ENCODE measurements at regions of chr17 and their contacts with region 1.

Region 1: DNA sequence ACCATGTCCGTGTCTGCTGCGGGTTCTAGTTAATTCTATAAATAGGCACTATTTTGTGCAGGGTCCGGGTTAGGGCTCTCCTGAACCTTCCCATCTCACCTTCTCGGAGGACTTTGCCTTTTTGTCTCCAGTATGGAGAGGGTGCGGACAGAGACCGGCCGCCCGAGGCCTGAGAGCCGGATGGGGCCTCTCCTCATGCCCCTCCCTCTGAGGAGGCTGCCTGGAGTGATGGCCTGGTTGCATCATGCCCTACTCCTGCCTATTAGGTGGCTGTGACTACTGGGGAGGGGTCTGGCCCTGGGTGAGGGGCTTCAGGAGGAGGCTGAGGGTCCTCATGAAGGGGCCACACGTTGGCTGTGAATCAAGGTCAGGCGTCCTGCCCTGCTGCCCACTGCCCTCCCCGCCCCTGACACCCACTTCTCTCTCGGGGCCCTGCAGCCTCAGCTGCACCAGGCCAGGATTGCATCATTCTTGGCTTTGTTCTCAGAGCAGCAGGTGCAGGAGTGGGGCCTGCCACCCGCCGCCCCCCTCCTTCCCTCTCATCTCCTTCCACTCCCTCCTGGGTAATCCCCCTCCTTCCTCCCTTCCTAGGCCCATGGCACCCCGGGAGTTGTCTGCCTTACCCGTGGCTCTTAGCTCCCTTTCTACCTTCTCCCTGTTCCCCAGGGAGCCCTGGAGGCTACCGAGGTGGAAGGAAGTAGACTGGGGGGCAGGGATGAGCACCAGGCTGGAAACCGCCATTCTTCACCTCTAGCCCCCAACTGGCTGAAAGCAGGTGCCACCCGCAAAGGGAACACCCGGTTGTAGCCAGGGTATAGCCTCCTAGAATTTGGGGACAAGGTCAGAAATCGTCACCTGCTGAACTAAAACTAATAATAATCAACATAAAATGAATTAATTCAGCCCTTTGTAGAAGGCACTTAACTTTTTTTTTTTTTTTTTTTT is 12.7 kb upstream of the ARHGAP23 start:
- DNase-seq: peak; percentile 69
- ATAC-seq: peak; percentile 43
- H3K4me3 Mint-ChIP-seq: peak overlapping the region; percentile 61
- H3K27ac Mint-ChIP-seq: peak overlapping the region; percentile 91
- H3K4me1 Mint-ChIP-seq: peaks cover 59% of the 10 kb centered on the region
- H3K27me3 Mint-ChIP-seq: peaks cover 29% of the 10 kb centered on the region
- CTCF ChIP-seq: no peak

Region 2: DNA sequence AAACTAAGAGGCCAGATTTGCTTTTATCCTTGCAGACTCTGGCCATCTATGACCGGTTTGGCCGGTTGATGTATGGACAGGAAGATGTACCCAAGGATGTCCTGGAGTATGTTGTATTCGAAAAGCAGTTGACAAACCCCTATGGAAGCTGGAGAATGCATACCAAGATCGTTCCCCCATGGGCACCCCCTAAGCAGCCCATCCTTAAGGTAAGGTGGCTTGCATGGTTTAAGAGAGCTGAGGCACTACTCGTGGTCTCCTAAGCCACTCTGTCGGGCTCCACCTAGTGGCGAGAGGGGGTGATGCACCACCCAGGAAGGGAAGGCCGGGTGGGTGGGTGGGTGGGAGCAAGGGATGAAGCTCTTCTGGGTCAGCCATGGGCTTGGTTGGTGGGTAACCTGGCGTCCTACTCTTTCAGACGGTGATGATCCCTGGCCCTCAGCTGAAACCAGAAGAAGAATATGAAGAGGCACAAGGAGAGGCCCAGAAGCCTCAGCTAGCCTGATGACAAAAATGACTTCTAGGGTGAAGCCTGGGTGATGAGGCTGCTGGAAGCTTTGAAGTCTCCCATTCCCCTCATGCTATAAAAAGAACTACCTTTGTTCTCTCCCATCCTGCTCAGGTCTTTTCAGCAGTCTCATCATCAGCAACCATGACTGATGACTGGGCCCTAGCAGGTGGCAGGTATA is 93.3 kb before region 1 on chr17:
- CTCF ChIA-PET with region 1: interaction called, 43 read pairs
- POLR2A ChIA-PET with region 1: interaction called, 6 read pairs
- DNase-seq: peak; percentile 83
- ATAC-seq: peak; percentile 78
- H3K4me3 Mint-ChIP-seq: no peak overlapping the region
- H3K27ac Mint-ChIP-seq: no peak overlapping the region; the same call in 1 of the 2 replicates
- H3K4me1 Mint-ChIP-seq: peaks cover 22% of the 10 kb centered on the region
- H3K27me3 Mint-ChIP-seq: no peaks in the 10 kb centered on the region
- CTCF ChIP-seq: peak; percentile 90

Region 3: GRCh38 chr17:38358586-38359513 is 56.7 kb before region 1 on chr17:
- CTCF ChIA-PET with region 1: interaction called, 51 read pairs
- POLR2A ChIA-PET with region 1: interaction called, 3 read pairs
- DNase-seq: no peak
- ATAC-seq: no peak
- H3K4me3 Mint-ChIP-seq: no peak overlapping the region
- H3K27ac Mint-ChIP-seq: peak overlapping the region; percentile 46; the same call in 1 of the 2 replicates
- H3K4me1 Mint-ChIP-seq: peaks cover 61% of the 10 kb centered on the region
- H3K27me3 Mint-ChIP-seq: no peaks in the 10 kb centered on the region
- CTCF ChIP-seq: no peak

Region 4: DNA sequence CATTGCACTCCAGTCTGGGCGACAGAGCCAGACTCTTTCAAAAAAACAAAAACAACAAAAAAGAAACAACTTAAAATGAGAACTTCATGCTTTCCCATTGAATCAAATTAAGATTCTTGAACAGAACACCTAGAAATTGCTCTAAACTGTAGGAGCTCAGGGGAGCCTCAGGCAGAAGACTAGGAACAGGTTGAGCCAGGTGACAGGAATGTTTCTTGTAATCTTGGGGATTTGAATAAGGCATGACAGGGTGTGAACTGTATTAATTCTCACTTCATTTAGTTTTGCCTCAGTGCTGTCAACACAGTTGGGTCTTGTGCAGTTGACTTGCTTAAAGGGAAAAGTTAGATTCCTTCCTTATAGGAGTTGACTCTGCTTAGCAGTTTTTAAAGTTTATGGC is 36.1 kb before region 1 on chr17:
- CTCF ChIA-PET with region 1: interaction called, 17 read pairs
- POLR2A ChIA-PET with region 1: no interaction called
- DNase-seq: no peak
- ATAC-seq: no peak
- H3K4me3 Mint-ChIP-seq: no peak overlapping the region
- H3K27ac Mint-ChIP-seq: no peak overlapping the region
- H3K4me1 Mint-ChIP-seq: no peaks in the 10 kb centered on the region
- H3K27me3 Mint-ChIP-seq: no peaks in the 10 kb centered on the region
- CTCF ChIP-seq: no peak

Region 5: DNA sequence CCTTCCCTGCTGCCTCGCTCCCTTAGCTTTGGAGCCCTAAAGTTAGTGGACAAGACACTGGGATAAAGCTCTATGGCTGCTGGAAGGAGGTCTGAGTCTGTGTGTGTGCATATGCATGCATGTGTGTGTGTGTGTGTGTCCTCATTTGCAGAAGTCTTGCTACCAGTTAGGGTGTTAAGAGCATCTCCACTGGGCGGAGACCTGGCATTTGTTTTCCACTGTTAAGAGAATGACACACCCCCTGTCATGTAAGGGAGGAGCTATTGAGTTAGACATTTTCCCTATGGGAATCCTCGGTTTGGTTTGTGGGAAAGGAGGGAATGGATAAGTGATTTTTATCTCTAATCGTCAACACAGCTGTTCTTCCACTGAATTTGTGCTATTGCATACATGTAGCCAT is 12.0 kb before region 1 on chr17:
- CTCF ChIA-PET with region 1: interaction called, 62 read pairs
- POLR2A ChIA-PET with region 1: interaction called, 10 read pairs
- DNase-seq: no peak
- ATAC-seq: peak; percentile 62
- H3K4me3 Mint-ChIP-seq: peak overlapping the region; percentile 45
- H3K27ac Mint-ChIP-seq: peak overlapping the region; percentile 70; the same call in 1 of the 2 replicates
- H3K4me1 Mint-ChIP-seq: peaks cover 37% of the 10 kb centered on the region
- H3K27me3 Mint-ChIP-seq: no peaks in the 10 kb centered on the region
- CTCF ChIP-seq: no peak

Region 6: GRCh38 chr17:38454516-38454915 is 39.0 kb after region 1 on chr17:
- CTCF ChIA-PET with region 1: interaction called, 70 read pairs
- POLR2A ChIA-PET with region 1: interaction called, 26 read pairs
- DNase-seq: no peak
- ATAC-seq: no peak
- H3K4me3 Mint-ChIP-seq: peak overlapping the region; percentile 62
- H3K27ac Mint-ChIP-seq: peak overlapping the region; percentile 84
- H3K4me1 Mint-ChIP-seq: peaks cover 65% of the 10 kb centered on the region
- H3K27me3 Mint-ChIP-seq: 0 out of 2 replicates have a peak, but pooled peaks cover 2% of the 10 kb centered on the region
- CTCF ChIP-seq: no peak

Region 7: DNA sequence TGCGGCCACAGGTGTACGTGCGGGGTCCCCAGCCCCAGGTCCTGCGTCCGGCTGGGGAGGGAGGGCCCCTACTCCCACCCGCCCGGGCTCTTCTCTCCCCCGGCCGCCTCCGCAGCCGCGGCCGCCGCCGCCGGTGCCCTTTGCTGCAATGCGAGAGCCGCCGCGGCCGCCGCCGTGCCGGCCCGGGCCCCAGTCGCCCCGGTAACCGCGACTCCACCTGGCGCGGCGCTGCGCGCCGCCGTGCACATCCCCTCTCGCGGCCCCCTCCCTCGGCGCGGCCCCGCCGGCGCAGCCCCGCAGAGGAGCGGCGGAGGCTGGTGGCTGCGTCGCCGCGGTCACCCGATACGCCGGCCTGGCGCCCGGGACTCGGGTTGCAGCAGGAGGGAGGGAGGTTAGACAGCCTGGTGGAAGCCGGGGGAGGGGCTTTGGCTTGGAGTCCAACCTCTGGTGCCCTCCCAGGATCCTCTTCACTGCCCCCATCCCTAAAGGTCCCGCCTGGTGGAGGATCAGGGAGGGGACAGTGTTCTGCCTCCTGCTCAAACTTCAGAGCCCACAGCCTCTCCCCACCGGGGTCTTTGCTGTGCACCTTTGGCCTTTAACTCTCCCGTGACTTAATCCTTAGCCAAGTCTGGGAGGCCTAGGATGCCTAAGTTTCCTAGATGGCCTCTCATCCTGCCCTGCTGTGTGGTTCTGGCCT is 157.3 kb after region 1 on chr17:
- CTCF ChIA-PET with region 1: no interaction called
- POLR2A ChIA-PET with region 1: no interaction called
- DNase-seq: peak; percentile 72
- ATAC-seq: peak; percentile 68
- H3K4me3 Mint-ChIP-seq: peak overlapping the region; percentile 59
- H3K27ac Mint-ChIP-seq: no peak overlapping the region
- H3K4me1 Mint-ChIP-seq: peaks cover 46% of the 10 kb centered on the region
- H3K27me3 Mint-ChIP-seq: peaks cover 93% of the 10 kb centered on the region
- CTCF ChIP-seq: no peak